ENCODE measurements at regions of chr1 and their contacts with region 1.

Region 1: DNA sequence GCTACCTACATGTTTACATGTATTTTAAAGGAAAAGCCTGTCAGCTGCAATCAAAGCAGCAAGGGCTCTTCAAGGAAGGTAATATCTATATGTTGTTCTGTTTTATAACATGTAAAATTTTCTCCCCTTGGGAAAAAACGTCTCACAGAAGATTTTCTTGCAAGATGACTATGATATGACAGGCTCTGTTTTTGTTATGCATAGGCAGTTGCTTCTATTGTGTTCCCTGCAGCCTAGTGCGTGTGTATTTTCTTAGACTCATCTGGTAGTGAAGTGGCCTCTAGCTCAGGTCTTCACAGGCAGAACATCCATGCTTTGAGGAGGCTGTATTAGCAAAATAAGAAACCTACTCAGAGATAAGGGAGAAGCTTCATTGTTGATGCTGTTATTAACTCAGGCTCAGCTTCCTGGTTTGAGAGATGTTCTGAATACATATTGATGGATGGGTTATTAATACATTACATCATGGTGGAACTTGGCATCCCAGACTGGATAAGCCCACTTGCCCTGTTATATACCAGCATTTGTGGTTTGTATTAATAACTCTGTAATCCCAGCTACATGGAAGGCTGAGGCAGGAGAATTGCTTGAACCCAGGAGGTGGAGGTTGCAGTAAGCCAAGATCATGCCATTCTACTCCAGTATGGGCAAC is 35.8 kb downstream of the LAMC1 start:
- DNase-seq: no peak
- ATAC-seq: no peak
- H3K4me3 ChIP-seq: no peak overlapping the region
- H3K27ac ChIP-seq: no peak overlapping the region
- H3K4me1 ChIP-seq: peaks cover 14% of the 10 kb centered on the region
- H3K27me3 ChIP-seq: no peaks in the 10 kb centered on the region
- CTCF ChIP-seq: no peak
- EP300 ChIP-seq: no peak
- POLR2A ChIP-seq: no peak
- RAD21 ChIP-seq: no peak

Region 2: GRCh38 chr1:182739545-182739944 is 319.4 kb before region 1 on chr1:
- CTCF ChIA-PET with region 1: no interaction called
- POLR2A ChIA-PET with region 1: no interaction called
- RAD21 ChIA-PET with region 1: no interaction called
- SMC1A ChIA-PET with region 1: no interaction called
- in situ Hi-C with region 1: no loop called
- intact Hi-C with region 1: no loop called
- DNase-seq: no peak
- ATAC-seq: peak; percentile 98
- H3K4me3 ChIP-seq: no peak overlapping the region
- H3K27ac ChIP-seq: no peak overlapping the region
- H3K4me1 ChIP-seq: no peaks in the 10 kb centered on the region
- H3K27me3 ChIP-seq: no peaks in the 10 kb centered on the region; a peak in 1 of 4 replicates
- CTCF ChIP-seq: no peak
- EP300 ChIP-seq: peak in 1 of 2 experiments; percentile 21; a peak in 1 of 4 replicates
- POLR2A ChIP-seq: no peak
- RAD21 ChIP-seq: no peak

Region 3: GRCh38 chr1:183048087-183049085 is 10.6 kb before region 1 on chr1:
- CTCF ChIA-PET with region 1: no interaction called
- POLR2A ChIA-PET with region 1: interaction called, 3 read pairs
- RAD21 ChIA-PET with region 1: interaction called, 5 read pairs
- SMC1A ChIA-PET with region 1: interaction called, 15 read pairs
- in situ Hi-C with region 1: no loop called
- intact Hi-C with region 1: no loop called
- DNase-seq: peak; percentile 78
- ATAC-seq: peak; percentile 98
- H3K4me3 ChIP-seq: no peak overlapping the region
- H3K27ac ChIP-seq: peak overlapping the region; percentile 46
- H3K4me1 ChIP-seq: peaks cover 29% of the 10 kb centered on the region
- H3K27me3 ChIP-seq: no peaks in the 10 kb centered on the region
- CTCF ChIP-seq: no peak
- EP300 ChIP-seq: peak in 1 of 2 experiments; percentile 61; a peak in 1 of 4 replicates
- POLR2A ChIP-seq: no peak
- RAD21 ChIP-seq: no peak

Region 4: GRCh38 chr1:183116416-183116815 is 57.4 kb after region 1 on chr1:
- CTCF ChIA-PET with region 1: no interaction called
- POLR2A ChIA-PET with region 1: no interaction called
- RAD21 ChIA-PET with region 1: no interaction called
- SMC1A ChIA-PET with region 1: no interaction called
- in situ Hi-C with region 1: no loop called
- intact Hi-C with region 1: no loop called
- DNase-seq: no peak
- ATAC-seq: no peak
- H3K4me3 ChIP-seq: no peak overlapping the region
- H3K27ac ChIP-seq: no peak overlapping the region
- H3K4me1 ChIP-seq: no peaks in the 10 kb centered on the region
- H3K27me3 ChIP-seq: no peaks in the 10 kb centered on the region
- CTCF ChIP-seq: no peak
- EP300 ChIP-seq: no peak
- POLR2A ChIP-seq: no peak
- RAD21 ChIP-seq: no peak